ENCODE measurements at regions of chr3 and their contacts with region 1.

Region 1: GRCh38 chr3:179309225-179310078 is 13.4 kb upstream of the ZNF639 start:
- DNase-seq: no peak
- ATAC-seq: no peak
- H3K4me3 ChIP-seq: no peak overlapping the region
- H3K4me3 Mint-ChIP-seq: no peak overlapping the region
- H3K27ac ChIP-seq: no peak overlapping the region
- H3K27ac Mint-ChIP-seq: no peak overlapping the region
- H3K4me1 ChIP-seq: no peaks in the 10 kb centered on the region
- H3K4me1 Mint-ChIP-seq: no peaks in the 10 kb centered on the region
- H3K27me3 ChIP-seq: no peaks in the 10 kb centered on the region
- H3K27me3 Mint-ChIP-seq: peaks cover 3% of the 10 kb centered on the region
- CTCF ChIP-seq: no peak

Region 2: GRCh38 chr3:179108086-179108485 is 201.4 kb before region 1 on chr3:
- CTCF ChIA-PET with region 1: interaction called, 14 read pairs
- POLR2A ChIA-PET with region 1: interaction called, 4 read pairs
- intact Hi-C with region 1: no loop called
- DNase-seq: no peak
- ATAC-seq: no peak
- H3K4me3 ChIP-seq: no peak overlapping the region
- H3K4me3 Mint-ChIP-seq: no peak overlapping the region
- H3K27ac ChIP-seq: no peak overlapping the region
- H3K27ac Mint-ChIP-seq: no peak overlapping the region
- H3K4me1 ChIP-seq: no peaks in the 10 kb centered on the region
- H3K4me1 Mint-ChIP-seq: peaks cover 1% of the 10 kb centered on the region
- H3K27me3 ChIP-seq: no peaks in the 10 kb centered on the region
- H3K27me3 Mint-ChIP-seq: peaks cover 4% of the 10 kb centered on the region
- CTCF ChIP-seq: no peak